Transverse colon (tissue), 4 donors: ENCODE measurements at regions of chr19 and their contacts with region 1.

Region 1: GRCh38 chr19:40744554-40745401 is 5.5 kb downstream of the ACTMAP start:
- DNase-seq: no peak
- H3K4me3 ChIP-seq: no peak overlapping the region
- H3K27ac ChIP-seq: peak overlapping the region in 1 of 4 donors; percentile 7
- H3K4me1 ChIP-seq: peaks cover 7 to 9% (median 8%) of the 10 kb centered on the region in 4 donors
- H3K27me3 ChIP-seq: no peaks in the 10 kb centered on the region
- CTCF ChIP-seq: no peak
- EP300 ChIP-seq: no peak
- POLR2A ChIP-seq: no peak

Region 2: DNA sequence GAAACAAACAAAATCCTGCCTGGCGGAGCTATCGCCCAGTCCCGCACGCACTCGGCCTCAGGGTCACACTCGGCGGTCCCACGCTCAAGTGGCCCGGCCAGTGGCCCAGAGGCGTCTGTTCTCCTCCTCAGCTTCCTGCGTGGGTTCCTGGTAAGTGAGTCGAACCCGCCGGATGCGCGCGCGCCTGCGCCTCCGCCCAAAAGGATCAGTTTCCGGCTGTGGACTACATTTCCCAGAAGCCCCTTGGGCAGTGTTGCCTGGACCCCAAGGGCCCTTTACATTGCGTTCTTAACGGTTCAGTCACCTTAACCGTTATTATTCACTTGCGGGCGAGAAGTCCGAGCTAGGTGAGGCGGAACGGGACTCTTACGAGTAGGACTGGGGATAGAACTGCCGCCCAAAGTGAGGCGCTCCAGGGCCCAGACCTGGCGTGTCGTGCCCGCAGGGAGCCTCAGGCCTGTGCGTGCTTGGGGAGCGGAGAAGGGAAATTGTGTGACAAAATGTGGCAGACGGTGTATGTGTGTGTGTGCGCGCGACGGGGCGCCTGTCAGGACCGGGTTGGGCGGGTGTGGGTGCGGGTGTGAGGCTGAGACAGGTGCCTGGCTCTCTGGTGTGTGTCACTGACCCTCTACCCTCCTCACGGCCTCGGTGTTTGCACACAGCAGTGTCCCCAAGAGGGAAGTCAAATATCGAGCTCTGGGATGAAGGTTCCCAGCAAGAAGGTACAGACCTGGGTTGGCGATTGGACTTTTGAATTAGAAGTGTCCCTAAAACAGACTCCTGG is 747.8 kb before region 1 on chr19 and contains the start of gene ZNF546:
- in situ Hi-C with region 1: no loop called
- intact Hi-C with region 1: loop called (anchors 10 kb)
- DNase-seq: peak; percentile 93
- H3K4me3 ChIP-seq: peak within 1 kb of the TSS; percentile 45 to 70 (median 55)
- H3K27ac ChIP-seq: peak within 1 kb of the TSS; percentile 72 to 87 (median 85)
- H3K4me1 ChIP-seq: peaks cover 10 to 16% (median 12%) of the 10 kb centered on the region in 4 donors
- H3K27me3 ChIP-seq: no peaks in the 10 kb centered on the region
- CTCF ChIP-seq: no peak
- EP300 ChIP-seq: no peak
- POLR2A ChIP-seq: peak; percentile 85
- total RNA-seq, gene ZNF546: 0.60 to 8.1 (median 2.4) TPM

Region 3: DNA sequence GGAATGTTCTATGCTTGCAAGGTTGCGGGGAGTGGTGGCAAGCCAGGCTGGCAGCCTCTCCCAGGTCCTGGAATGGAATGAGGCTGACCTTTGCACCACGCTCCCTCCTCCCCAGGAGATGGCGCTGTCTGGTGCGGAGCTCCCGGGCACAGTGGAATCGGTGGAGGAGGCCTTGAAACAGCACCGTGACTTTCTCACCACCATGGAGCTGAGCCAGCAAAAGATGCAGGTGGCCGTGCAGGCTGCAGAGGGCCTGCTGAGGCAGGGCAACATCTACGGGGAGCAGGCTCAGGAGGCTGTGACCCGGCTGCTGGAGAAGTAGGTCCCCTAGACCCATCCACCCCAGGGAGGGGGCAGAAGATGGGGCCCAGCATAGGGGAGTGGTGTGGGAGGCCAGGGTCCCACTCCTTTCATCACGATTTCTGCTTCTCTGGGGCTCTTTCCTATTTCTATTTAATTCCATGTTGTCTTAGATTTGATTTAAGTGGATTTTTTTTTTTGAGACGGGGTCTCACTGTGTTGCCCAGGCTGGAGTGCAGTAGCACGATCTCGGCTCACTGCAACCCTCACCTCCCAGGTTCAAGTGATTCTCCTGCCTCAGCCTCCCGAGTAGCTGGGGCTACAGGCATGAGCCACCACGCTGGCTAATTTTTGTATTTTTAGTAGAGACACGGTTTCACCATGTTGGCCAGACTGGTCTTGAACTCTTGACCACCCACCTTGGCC is 221.3 kb before region 1 on chr19:
- in situ Hi-C with region 1: no loop called
- intact Hi-C with region 1: no loop called
- DNase-seq: peak; percentile 88
- H3K4me3 ChIP-seq: no peak overlapping the region
- H3K27ac ChIP-seq: no peak overlapping the region
- H3K4me1 ChIP-seq: peaks cover 0 to 11% (median 7%) of the 10 kb centered on the region in 4 donors
- H3K27me3 ChIP-seq: peaks cover 30% of the 10 kb centered on the region
- CTCF ChIP-seq: peak; percentile 41 to 84 (median 64)
- EP300 ChIP-seq: no peak
- POLR2A ChIP-seq: no peak